PC-3 (cell line): ENCODE measurements at regions of chr12 and their contacts with region 1.

Region 1: GRCh38 chr12:40921563-40922163 is 229.4 kb downstream of the CNTN1 start:
- DNase-seq: peak; percentile 60
- ATAC-seq: no peak
- H3K4me3 ChIP-seq: no peak overlapping the region
- H3K27ac ChIP-seq: no peak overlapping the region
- H3K4me1 ChIP-seq: no peaks in the 10 kb centered on the region
- H3K27me3 ChIP-seq: peaks cover 23% of the 10 kb centered on the region; the same call in 1 of the 2 replicates
- CTCF ChIP-seq: peak; percentile 81

Region 2: GRCh38 chr12:40152783-40153383 is 768.8 kb before region 1 on chr12:
- CTCF ChIA-PET with region 1: no interaction called
- POLR2A ChIA-PET with region 1: no interaction called
- intact Hi-C with region 1: loop called (anchors 10 kb)
- DNase-seq: peak; percentile 68
- ATAC-seq: peak; percentile 49
- H3K4me3 ChIP-seq: no peak overlapping the region
- H3K27ac ChIP-seq: no peak overlapping the region
- H3K4me1 ChIP-seq: peaks cover 4% of the 10 kb centered on the region; the same call in 1 of the 2 replicates
- H3K27me3 ChIP-seq: peaks cover 20% of the 10 kb centered on the region; the same call in 1 of the 2 replicates
- CTCF ChIP-seq: peak; percentile 85

Region 3: DNA sequence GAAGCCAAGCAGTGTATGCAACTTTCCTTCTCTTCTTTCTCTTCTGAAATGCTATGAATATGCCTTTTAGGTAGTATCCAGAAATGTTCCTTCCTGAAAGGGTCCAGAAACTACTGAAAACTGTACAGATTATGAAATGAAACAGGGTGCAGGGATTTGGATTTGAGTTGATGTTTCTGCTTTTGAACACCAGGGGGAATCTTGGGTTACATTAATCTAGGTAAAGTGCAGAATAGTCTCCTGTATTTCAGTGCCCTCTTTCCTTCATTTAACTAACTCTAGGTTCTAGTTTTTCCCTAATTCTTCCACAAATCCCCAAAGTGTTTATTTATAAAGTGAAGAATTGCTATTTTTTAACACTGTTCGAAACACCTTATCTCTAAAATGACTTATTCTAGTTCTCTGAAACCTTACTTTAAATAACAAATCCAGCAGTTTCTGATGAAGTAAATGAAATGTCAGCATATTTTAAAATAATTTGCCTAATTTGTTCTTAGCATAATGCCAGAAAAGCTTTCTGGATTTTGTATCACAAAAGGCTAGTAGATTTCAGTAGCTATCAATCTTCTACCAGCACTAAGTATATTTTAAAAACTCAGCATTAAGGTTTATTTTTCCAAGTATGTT is 585.0 kb before region 1 on chr12:
- CTCF ChIA-PET with region 1: no interaction called
- POLR2A ChIA-PET with region 1: no interaction called
- intact Hi-C with region 1: loop called (anchors 1 kb)
- DNase-seq: peak; percentile 41
- ATAC-seq: peak; percentile 58; the same call in 1 of the 2 replicates
- H3K4me3 ChIP-seq: no peak overlapping the region
- H3K27ac ChIP-seq: no peak overlapping the region
- H3K4me1 ChIP-seq: no peaks in the 10 kb centered on the region
- H3K27me3 ChIP-seq: peaks cover 5% of the 10 kb centered on the region; the same call in 1 of the 2 replicates
- CTCF ChIP-seq: peak; percentile 57; the same call in 1 of the 2 replicates

Region 4: DNA sequence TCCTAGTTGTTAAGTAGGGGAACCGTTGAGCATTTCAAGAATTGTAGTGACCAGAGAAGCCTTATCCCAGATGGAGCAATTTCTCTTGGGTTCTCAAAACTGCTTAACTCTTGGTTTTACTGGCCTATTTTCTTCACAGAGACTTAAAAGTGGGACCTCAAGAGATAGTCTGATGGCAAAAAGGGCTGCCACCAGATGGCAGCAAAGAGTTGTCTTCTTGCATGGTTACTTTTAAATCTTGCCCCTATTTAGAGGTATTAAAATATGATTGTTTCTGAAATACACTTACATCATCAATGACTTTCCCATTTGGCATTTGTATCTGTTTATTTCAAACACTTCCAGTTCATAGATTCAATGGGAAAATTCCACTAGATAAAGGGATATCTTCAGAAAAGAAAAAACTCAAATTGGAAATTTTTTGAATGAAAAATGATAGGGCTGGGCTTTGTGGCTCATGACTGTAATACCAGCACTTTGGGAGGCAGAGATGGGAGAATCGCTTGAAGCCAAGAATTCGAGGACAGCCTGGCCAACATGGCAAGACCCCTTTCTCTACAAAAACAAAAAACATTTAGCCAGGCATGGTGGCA is 299.3 kb before region 1 on chr12:
- CTCF ChIA-PET with region 1: no interaction called
- POLR2A ChIA-PET with region 1: no interaction called
- intact Hi-C with region 1: loop called (anchors 1 kb)
- DNase-seq: peak; percentile 74
- ATAC-seq: no peak
- H3K4me3 ChIP-seq: no peak overlapping the region
- H3K27ac ChIP-seq: no peak overlapping the region
- H3K4me1 ChIP-seq: no peaks in the 10 kb centered on the region
- H3K27me3 ChIP-seq: peaks cover 23% of the 10 kb centered on the region
- CTCF ChIP-seq: peak; percentile 90

Region 5: DNA sequence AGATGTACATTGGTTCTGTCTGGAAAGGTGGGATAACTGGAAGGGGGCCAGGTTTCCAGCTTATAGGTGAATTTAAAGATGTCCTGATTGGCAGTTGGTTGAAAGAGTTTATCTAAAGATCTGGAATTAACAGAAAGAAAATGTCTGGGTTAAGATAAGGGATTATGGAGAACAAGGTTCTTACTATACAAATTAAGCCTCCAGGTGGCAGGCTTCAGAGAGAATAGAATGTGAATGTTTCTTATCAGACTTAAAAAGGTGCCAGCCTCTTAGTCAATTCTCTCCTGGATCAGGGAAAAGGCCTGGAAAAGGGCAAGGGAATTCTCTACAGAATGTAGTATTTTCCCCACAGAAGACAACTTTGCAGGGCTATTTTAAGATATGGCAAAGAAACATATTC is 176.3 kb before region 1 on chr12:
- CTCF ChIA-PET with region 1: no interaction called
- POLR2A ChIA-PET with region 1: no interaction called
- intact Hi-C with region 1: loop called (anchors 1 kb)
- DNase-seq: peak; percentile 10
- ATAC-seq: no peak
- H3K4me3 ChIP-seq: no peak overlapping the region
- H3K27ac ChIP-seq: no peak overlapping the region
- H3K4me1 ChIP-seq: no peaks in the 10 kb centered on the region
- H3K27me3 ChIP-seq: no peaks in the 10 kb centered on the region
- CTCF ChIP-seq: no peak; the same call in 1 of the 2 replicates

Region 6: GRCh38 chr12:40889329-40889728 is 32.3 kb before region 1 on chr12:
- CTCF ChIA-PET with region 1: no interaction called
- POLR2A ChIA-PET with region 1: no interaction called
- intact Hi-C with region 1: no loop called
- DNase-seq: no peak
- ATAC-seq: no peak
- H3K4me3 ChIP-seq: no peak overlapping the region
- H3K27ac ChIP-seq: no peak overlapping the region
- H3K4me1 ChIP-seq: no peaks in the 10 kb centered on the region
- H3K27me3 ChIP-seq: peaks cover 28% of the 10 kb centered on the region
- CTCF ChIP-seq: no peak

Region 7: DNA sequence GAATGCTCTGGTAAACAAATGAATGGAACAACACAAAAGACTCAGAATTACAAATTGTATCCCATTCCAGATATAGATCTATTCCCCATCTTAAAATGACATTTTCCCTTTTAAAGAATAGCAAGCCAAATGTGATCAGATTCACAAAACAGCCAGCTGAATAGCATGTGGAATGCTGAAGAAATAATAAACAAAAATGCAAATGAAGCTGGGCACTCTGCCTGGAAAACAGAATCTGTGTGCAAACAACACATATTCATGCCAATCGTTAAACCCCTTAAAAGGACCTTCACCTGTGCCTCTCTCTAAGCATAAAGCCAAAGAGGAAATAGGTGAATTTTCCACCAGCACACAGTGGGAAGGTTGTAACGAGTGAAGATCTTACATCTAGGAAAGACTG is 198.5 kb after region 1 on chr12:
- CTCF ChIA-PET with region 1: no interaction called
- POLR2A ChIA-PET with region 1: no interaction called
- intact Hi-C with region 1: no loop called
- DNase-seq: no peak
- ATAC-seq: no peak
- H3K4me3 ChIP-seq: no peak overlapping the region
- H3K27ac ChIP-seq: no peak overlapping the region
- H3K4me1 ChIP-seq: no peaks in the 10 kb centered on the region
- H3K27me3 ChIP-seq: no peaks in the 10 kb centered on the region
- CTCF ChIP-seq: no peak